ENCODE measurements at regions of chr7 and their contacts with region 1.

Region 1: GRCh38 chr7:45111298-45112223 is at the start of gene TBRG4:
- DNase-seq: peak; percentile 97
- H3K4me3 ChIP-seq: peak within 1 kb of the TSS; percentile 85
- H3K27ac ChIP-seq: peak within 1 kb of the TSS; percentile 80
- H3K4me1 ChIP-seq: peaks cover 46% of the 10 kb centered on the region
- CTCF ChIP-seq: peak; percentile 77
- total RNA-seq, gene TBRG4: 113 and 117 TPM in 2 replicates

Region 2: DNA sequence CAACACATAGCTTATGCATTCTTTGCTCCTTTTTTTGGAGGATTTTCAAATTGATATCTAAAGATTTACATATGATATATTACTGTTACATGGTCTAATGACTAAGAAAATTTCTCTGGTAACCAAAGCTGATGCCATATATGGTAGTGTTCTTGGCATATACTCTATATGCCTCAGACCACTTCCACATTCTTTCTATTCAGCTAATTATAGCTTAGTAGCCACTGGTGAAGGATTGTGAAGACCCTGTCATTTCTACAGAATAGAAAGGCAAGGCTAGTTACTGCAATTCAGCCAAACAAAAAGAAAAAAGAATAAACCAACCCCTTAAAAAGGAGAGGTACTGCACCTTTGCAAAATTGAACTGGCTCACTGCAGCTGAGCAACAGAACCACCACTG is 230.0 kb before region 1 on chr7:
- CTCF ChIA-PET with region 1: no interaction called
- POLR2A ChIA-PET with region 1: no interaction called
- intact Hi-C with region 1: no loop called
- DNase-seq: no peak
- H3K4me3 ChIP-seq: peak overlapping the region; percentile 77
- H3K27ac ChIP-seq: no peak overlapping the region
- H3K4me1 ChIP-seq: peaks cover 56% of the 10 kb centered on the region
- CTCF ChIP-seq: no peak

Region 3: DNA sequence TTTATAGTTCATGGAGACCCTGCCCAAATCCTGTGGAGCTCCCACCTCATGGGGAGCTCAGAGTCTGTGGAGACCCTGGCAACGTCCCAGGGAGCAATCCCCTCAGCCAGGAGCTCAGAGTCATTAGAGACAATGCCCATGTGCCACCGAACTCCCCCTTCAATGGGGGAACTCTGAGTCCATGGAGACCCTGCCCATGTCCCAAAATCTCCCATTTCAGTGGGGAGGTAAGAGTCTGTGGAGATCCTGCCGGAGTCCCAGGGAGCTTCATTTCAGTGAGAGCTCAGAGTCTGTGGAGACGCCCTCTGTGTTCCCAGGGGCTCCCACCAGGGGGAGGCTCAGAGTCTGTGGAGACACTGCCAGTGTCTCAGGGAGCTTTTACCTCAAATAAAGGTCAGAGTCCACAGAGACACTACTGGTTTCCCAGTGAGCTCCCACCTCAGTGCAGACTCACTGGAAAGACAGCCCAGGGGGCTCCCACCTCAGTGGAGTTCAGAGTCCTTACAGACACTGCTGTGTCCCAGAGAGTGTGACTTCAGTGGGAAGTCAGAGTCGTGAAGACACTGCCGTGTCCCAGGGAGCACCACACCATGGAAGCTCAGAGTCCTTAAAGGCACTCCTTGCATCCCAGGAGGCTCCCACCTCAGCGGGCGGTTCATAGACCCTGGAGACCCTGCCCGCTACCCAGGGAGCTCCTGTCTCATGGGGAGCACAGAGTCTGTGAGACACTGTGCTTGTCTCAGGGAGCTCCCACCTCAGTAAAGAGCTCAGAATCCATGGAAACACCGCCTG is 137.8 kb before region 1 on chr7:
- CTCF ChIA-PET with region 1: interaction called, 3 read pairs
- POLR2A ChIA-PET with region 1: interaction called, 6 read pairs
- intact Hi-C with region 1: loop called (anchors 2 kb)
- DNase-seq: peak; percentile 55
- H3K4me3 ChIP-seq: no peak overlapping the region
- H3K27ac ChIP-seq: no peak overlapping the region
- H3K4me1 ChIP-seq: peaks cover 32% of the 10 kb centered on the region
- CTCF ChIP-seq: peak; percentile 79

Measured in OCI-LY7 (cell line).